Dorsolateral prefrontal cortex (tissue), 120 donors: ENCODE measurements at regions of chr11 and their contacts with region 1.

Region 1: DNA sequence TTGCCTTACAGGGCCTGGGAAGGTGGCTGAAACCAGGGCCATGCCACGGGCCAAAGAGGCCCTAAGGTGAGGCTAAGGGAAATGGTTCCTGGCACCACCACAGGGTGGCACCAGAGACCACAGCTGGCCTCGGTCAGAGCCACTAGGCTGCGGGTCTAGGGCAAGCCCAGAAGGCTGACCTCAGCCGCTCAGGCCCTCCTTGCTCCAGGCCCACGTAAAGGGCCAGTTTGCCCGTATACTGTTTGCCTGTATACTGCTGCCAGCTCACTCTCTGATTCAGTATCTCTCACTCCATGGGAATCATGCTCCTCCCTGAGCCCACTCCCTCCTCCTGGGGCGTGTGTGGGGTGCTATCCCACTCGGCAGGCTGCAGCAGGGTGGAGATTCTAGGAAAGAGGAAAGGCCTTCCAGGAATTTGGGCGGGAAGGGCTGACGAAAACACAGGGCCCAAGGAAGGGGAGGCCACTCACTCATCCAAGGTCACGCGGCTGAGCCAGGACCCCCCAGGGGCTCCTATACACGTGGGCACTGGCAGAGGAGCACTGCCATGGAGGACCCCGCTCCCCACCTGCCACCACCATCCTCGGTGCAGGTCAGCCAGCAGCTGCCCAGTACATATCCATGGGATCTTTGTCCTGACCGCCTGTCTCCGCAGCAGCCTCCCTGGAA is 62.4 kb downstream of the NECTIN1 start:
- DNase-seq: peak; percentile 78 to 90 (median 86)
- H3K4me3 ChIP-seq: no peak overlapping the region
- H3K27ac ChIP-seq: peak overlapping the region in 53 of 59 donors; percentile 10 to 97 (median 67)
- H3K27me3 ChIP-seq: no peaks in the 10 kb centered on the region
- CTCF ChIP-seq: peak; percentile 77 to 99 (median 96)

Region 2: GRCh38 chr11:119323538-119324033 is 343.0 kb before region 1 on chr11:
- intact Hi-C with region 1: no loop called
- DNase-seq: peak in 7 of 10 donors; percentile 70 to 92 (median 81)
- H3K4me3 ChIP-seq: peak overlapping the region in 2 of 59 donors; percentile 5 to 17
- H3K27ac ChIP-seq: peak overlapping the region in 4 of 59 donors; percentile 12 to 61 (median 26)
- H3K27me3 ChIP-seq: no peaks in the 10 kb centered on the region
- CTCF ChIP-seq: peak; percentile 72 to 91 (median 85)

Region 3: GRCh38 chr11:119533921-119534736 is 132.5 kb before region 1 on chr11:
- intact Hi-C with region 1: loop called (anchors 1 to 5 kb)
- DNase-seq: peak; percentile 76 to 90 (median 82)
- H3K4me3 ChIP-seq: peak overlapping the region in 3 of 59 donors; percentile 1 to 11 (median 5)
- H3K27ac ChIP-seq: peak overlapping the region in 29 of 59 donors; percentile 2 to 73 (median 41)
- H3K27me3 ChIP-seq: no peaks in the 10 kb centered on the region
- CTCF ChIP-seq: peak; percentile 66 to 99 (median 93)

Region 4: DNA sequence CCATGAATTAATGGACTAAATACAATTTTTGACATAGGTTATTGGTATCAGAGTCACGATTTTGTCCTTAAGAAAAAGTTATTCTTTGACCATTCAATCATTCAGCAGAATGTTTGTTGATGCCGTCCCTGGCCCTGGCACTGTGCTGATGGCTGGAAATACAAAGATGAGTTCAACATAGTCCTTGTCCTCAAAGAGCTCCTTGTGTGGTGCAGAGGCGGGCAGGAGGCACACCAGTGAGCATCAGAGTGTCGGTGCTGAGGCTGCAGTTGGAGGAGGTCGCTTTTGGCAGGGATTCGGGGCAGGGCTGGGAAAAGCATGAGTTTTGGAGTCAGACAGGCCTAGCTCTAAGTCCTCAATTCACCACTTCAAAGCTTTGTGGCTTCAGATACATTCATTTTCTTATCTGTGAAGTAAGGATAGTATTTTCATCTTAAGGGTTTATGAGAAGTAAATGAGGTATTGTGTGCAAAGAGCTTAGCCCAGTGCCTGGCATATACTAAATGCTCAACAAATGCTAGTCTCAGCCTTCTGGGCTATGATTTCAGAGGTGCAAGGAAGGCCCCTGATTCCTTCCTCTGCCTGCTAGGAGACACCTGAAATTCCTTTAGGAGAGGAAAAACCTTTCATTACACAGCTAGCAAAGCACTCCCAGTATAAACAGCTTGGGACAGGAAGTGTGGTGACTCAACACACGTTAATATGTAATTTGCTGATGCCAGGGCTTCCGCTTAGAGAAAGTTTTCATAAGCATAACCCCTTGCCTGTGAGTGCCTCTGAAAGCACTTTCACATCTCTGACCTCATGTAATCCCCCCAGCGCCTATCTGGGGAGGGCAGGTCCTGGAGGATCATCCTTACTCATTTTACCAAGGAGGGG is 51.4 kb before region 1 on chr11:
- intact Hi-C with region 1: loop called in 1 of 2 experiments (anchors 10 kb)
- DNase-seq: peak in 9 of 10 donors; percentile 64 to 90 (median 80)
- H3K4me3 ChIP-seq: no peak overlapping the region
- H3K27ac ChIP-seq: peak overlapping the region; percentile 34 to 99 (median 92)
- H3K27me3 ChIP-seq: no peaks in the 10 kb centered on the region
- CTCF ChIP-seq: peak in 5 of 56 donors; percentile 9 to 27 (median 17)

Region 5: GRCh38 chr11:119878990-119879389 is 212.4 kb after region 1 on chr11:
- intact Hi-C with region 1: loop called (anchors 5 to 10 kb)
- DNase-seq: peak in 3 of 10 donors; percentile 34 to 49 (median 35)
- H3K4me3 ChIP-seq: no peak overlapping the region
- H3K27ac ChIP-seq: peak overlapping the region in 4 of 59 donors; percentile 11 to 46 (median 24)
- H3K27me3 ChIP-seq: no peaks in the 10 kb centered on the region
- CTCF ChIP-seq: peak in 29 of 56 donors; percentile 10 to 59 (median 26)

Region 6: GRCh38 chr11:120172054-120172911 is 505.7 kb after region 1 on chr11:
- intact Hi-C with region 1: loop called in 1 of 2 experiments (anchors 2 kb)
- DNase-seq: peak in 9 of 10 donors; percentile 55 to 80 (median 72)
- H3K4me3 ChIP-seq: peak overlapping the region in 3 of 59 donors; percentile 11 to 26 (median 11)
- H3K27ac ChIP-seq: no peak overlapping the region
- H3K27me3 ChIP-seq: peaks cover 0 to 5% (median 0%) of the 10 kb centered on the region in 45 donors
- CTCF ChIP-seq: peak; percentile 69 to 98 (median 92)